Tibial artery (tissue), 4 donors: ENCODE measurements at regions of chr22 and their contacts with region 1.

Region 1: GRCh38 chr22:30104501-30105156 is 24.4 kb downstream of the HORMAD2 start:
- DNase-seq: no peak
- H3K4me3 ChIP-seq: no peak overlapping the region
- H3K27ac ChIP-seq: no peak overlapping the region
- H3K4me1 ChIP-seq: no peaks in the 10 kb centered on the region
- H3K27me3 ChIP-seq: peaks cover 0 to 28% of the 10 kb centered on the region in 2 donors
- CTCF ChIP-seq: no peak

Region 2: DNA sequence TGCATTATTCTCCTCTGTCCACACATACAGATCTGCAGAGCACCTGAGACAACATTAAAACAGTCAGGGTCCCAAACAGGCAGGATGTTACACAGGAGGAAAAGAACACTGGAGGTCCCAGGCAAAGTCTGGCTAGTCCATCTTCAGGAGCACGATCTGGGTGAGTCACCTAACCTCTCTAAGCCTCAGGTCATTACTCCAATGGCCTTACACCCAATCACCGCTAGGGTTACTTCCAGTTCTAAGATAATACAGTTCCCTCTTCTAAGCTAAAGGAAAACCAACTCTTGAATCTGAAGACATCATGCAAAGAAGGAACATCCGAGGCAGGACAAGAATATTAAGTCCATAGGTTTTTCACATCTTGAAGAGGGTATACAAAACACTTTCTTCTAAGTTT is 291.1 kb before region 1 on chr22:
- intact Hi-C with region 1: no loop called
- DNase-seq: no peak
- H3K4me3 ChIP-seq: no peak overlapping the region
- H3K27ac ChIP-seq: no peak overlapping the region
- H3K4me1 ChIP-seq: no peaks in the 10 kb centered on the region
- H3K27me3 ChIP-seq: no peaks in the 10 kb centered on the region
- CTCF ChIP-seq: no peak

Region 3: GRCh38 chr22:30386960-30387827 is 282.6 kb after region 1 on chr22 and contains the start of gene RNF215:
- intact Hi-C with region 1: loop called (anchors 5 kb)
- DNase-seq: peak; percentile 65 to 91
- H3K4me3 ChIP-seq: peak within 1 kb of the TSS; percentile 60 to 62
- H3K27ac ChIP-seq: peak within 1 kb of the TSS; percentile 65 to 84
- H3K4me1 ChIP-seq: peaks cover 0 to 15% (median 12%) of the 10 kb centered on the region in 4 donors
- H3K27me3 ChIP-seq: no peaks in the 10 kb centered on the region
- CTCF ChIP-seq: peak; percentile 85 to 92